ENCODE measurements at regions of chr1 and their contacts with region 1.

Region 1: GRCh38 chr1:215114154-215114933 is 31.8 kb downstream of the KCNK2 start:
- DNase-seq: peak; percentile 98
- ATAC-seq: peak; percentile 84
- H3K4me3 ChIP-seq: peak overlapping the region; percentile 20; the same call in 1 of the 2 replicates
- H3K27ac ChIP-seq: peak overlapping the region; percentile 74
- H3K4me1 ChIP-seq: peaks cover 25% of the 10 kb centered on the region
- H3K27me3 ChIP-seq: no peaks in the 10 kb centered on the region
- CTCF ChIP-seq: no peak

Region 2: GRCh38 chr1:214808845-214809460 is 305.4 kb before region 1 on chr1:
- CTCF ChIA-PET with region 1: no interaction called
- POLR2A ChIA-PET with region 1: no interaction called
- intact Hi-C with region 1: loop called (anchors 1 kb)
- DNase-seq: peak; percentile 85
- ATAC-seq: peak; percentile 99
- H3K4me3 ChIP-seq: no peak overlapping the region
- H3K27ac ChIP-seq: no peak overlapping the region
- H3K4me1 ChIP-seq: no peaks in the 10 kb centered on the region
- H3K27me3 ChIP-seq: no peaks in the 10 kb centered on the region
- CTCF ChIP-seq: peak; percentile 96

Region 3: GRCh38 chr1:214864896-214865688 is 249.3 kb before region 1 on chr1:
- CTCF ChIA-PET with region 1: no interaction called
- POLR2A ChIA-PET with region 1: no interaction called
- intact Hi-C with region 1: loop called (anchors 1 kb)
- DNase-seq: peak; percentile 99
- ATAC-seq: peak; percentile 93
- H3K4me3 ChIP-seq: no peak overlapping the region
- H3K27ac ChIP-seq: peak overlapping the region; percentile 67
- H3K4me1 ChIP-seq: peaks cover 48% of the 10 kb centered on the region
- H3K27me3 ChIP-seq: no peaks in the 10 kb centered on the region
- CTCF ChIP-seq: no peak

Region 4: GRCh38 chr1:215040185-215040584 is 74.2 kb before region 1 on chr1:
- CTCF ChIA-PET with region 1: no interaction called
- POLR2A ChIA-PET with region 1: no interaction called
- intact Hi-C with region 1: no loop called
- DNase-seq: no peak
- ATAC-seq: no peak
- H3K4me3 ChIP-seq: no peak overlapping the region
- H3K27ac ChIP-seq: no peak overlapping the region
- H3K4me1 ChIP-seq: no peaks in the 10 kb centered on the region
- H3K27me3 ChIP-seq: peaks cover 11% of the 10 kb centered on the region; the same call in 1 of the 2 replicates
- CTCF ChIP-seq: no peak

Region 5: GRCh38 chr1:215140135-215140534 is 25.8 kb after region 1 on chr1:
- CTCF ChIA-PET with region 1: no interaction called
- POLR2A ChIA-PET with region 1: no interaction called
- intact Hi-C with region 1: loop called (anchors 1 kb)
- DNase-seq: peak; percentile 95
- ATAC-seq: peak; percentile 96
- H3K4me3 ChIP-seq: no peak overlapping the region
- H3K27ac ChIP-seq: no peak overlapping the region
- H3K4me1 ChIP-seq: peaks cover 11% of the 10 kb centered on the region
- H3K27me3 ChIP-seq: no peaks in the 10 kb centered on the region
- CTCF ChIP-seq: no peak

Region 6: GRCh38 chr1:215306426-215306825 is 192.1 kb after region 1 on chr1:
- CTCF ChIA-PET with region 1: no interaction called
- POLR2A ChIA-PET with region 1: no interaction called
- intact Hi-C with region 1: no loop called
- DNase-seq: no peak
- ATAC-seq: no peak
- H3K4me3 ChIP-seq: no peak overlapping the region
- H3K27ac ChIP-seq: no peak overlapping the region
- H3K4me1 ChIP-seq: no peaks in the 10 kb centered on the region
- H3K27me3 ChIP-seq: no peaks in the 10 kb centered on the region
- CTCF ChIP-seq: no peak

Region 7: GRCh38 chr1:215517441-215517891 is 403.1 kb after region 1 on chr1:
- CTCF ChIA-PET with region 1: no interaction called
- POLR2A ChIA-PET with region 1: no interaction called
- intact Hi-C with region 1: loop called (anchors 1 kb)
- DNase-seq: peak; percentile 93
- ATAC-seq: peak; percentile 99
- H3K4me3 ChIP-seq: peak overlapping the region; percentile 45; the same call in 1 of the 2 replicates
- H3K27ac ChIP-seq: peak overlapping the region; percentile 20
- H3K4me1 ChIP-seq: peaks cover 14% of the 10 kb centered on the region
- H3K27me3 ChIP-seq: no peaks in the 10 kb centered on the region
- CTCF ChIP-seq: peak; percentile 99

Region 8: DNA sequence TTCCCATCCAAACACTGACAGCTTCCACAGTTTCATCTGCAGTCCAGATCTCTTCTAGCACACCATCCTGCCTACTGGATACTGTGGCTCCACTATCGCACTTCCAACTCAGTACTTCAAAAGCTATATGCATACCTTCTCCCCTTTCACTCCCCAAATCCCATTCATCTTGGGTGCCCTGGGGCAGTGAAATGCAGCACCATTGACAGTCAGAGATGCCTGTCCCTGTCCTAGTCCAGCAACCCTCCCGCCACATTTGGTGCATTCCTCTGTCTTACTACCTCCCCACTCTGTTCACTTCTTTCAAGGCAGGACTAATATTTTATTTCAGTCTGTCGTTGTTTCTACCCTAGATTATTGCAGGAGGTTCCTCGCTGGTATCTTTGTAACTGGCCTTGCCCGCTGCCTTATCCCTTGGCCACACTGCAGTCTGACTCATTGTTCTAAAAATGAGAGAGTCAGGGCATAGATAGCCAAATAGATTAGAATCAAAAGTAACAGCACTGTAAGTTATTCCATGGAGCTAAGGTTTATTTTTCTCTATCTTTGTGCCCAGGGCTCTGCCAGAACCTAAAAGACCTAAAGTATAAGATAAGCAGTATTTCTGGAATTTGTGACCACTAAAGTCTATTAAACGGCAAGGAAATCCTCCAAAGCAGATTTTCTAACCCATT is 1512.2 kb after region 1 on chr1:
- CTCF ChIA-PET with region 1: no interaction called
- POLR2A ChIA-PET with region 1: interaction called, 11 read pairs
- intact Hi-C with region 1: no loop called
- DNase-seq: peak; percentile 27
- ATAC-seq: peak; percentile 64
- H3K4me3 ChIP-seq: no peak overlapping the region
- H3K27ac ChIP-seq: no peak overlapping the region
- H3K4me1 ChIP-seq: no peaks in the 10 kb centered on the region
- H3K27me3 ChIP-seq: peaks cover 42% of the 10 kb centered on the region; the same call in 1 of the 2 replicates
- CTCF ChIP-seq: no peak